ENCODE measurements at regions of chr10 and their contacts with region 1.

Region 1: GRCh38 chr10:12042797-12043651 is at the start of gene UPF2:
- DNase-seq: peak; percentile 94 to 99 (median 96)
- ATAC-seq: peak; percentile 87
- H3K4me3 ChIP-seq: peak within 1 kb of the TSS; percentile 99
- H3K4me3 Mint-ChIP-seq: peak within 1 kb of the TSS; percentile 98
- H3K27ac ChIP-seq: peak within 1 kb of the TSS; percentile 98 to 100
- H3K27ac Mint-ChIP-seq: peak within 1 kb of the TSS; percentile 100
- H3K4me1 ChIP-seq: peaks cover 17% of the 10 kb centered on the region
- H3K4me1 Mint-ChIP-seq: peaks cover 33% of the 10 kb centered on the region
- H3K27me3 ChIP-seq: no peaks in the 10 kb centered on the region
- H3K27me3 Mint-ChIP-seq: no peaks in the 10 kb centered on the region
- CTCF ChIP-seq: no peak
- total RNA-seq, gene UPF2: 14.5 to 15.3 TPM

Region 2: GRCh38 chr10:12031404-12031803 is 11.6 kb before region 1 on chr10:
- CTCF ChIA-PET with region 1: interaction called, 3 read pairs
- POLR2A ChIA-PET with region 1: interaction called, 16 read pairs
- intact Hi-C with region 1: no loop called
- DNase-seq: no peak
- ATAC-seq: no peak
- H3K4me3 ChIP-seq: no peak overlapping the region
- H3K4me3 Mint-ChIP-seq: no peak overlapping the region
- H3K27ac ChIP-seq: no peak overlapping the region
- H3K27ac Mint-ChIP-seq: peak overlapping the region; percentile 37
- H3K4me1 ChIP-seq: no peaks in the 10 kb centered on the region
- H3K4me1 Mint-ChIP-seq: peaks cover 37% of the 10 kb centered on the region
- H3K27me3 ChIP-seq: no peaks in the 10 kb centered on the region
- H3K27me3 Mint-ChIP-seq: no peaks in the 10 kb centered on the region
- CTCF ChIP-seq: no peak

Region 3: DNA sequence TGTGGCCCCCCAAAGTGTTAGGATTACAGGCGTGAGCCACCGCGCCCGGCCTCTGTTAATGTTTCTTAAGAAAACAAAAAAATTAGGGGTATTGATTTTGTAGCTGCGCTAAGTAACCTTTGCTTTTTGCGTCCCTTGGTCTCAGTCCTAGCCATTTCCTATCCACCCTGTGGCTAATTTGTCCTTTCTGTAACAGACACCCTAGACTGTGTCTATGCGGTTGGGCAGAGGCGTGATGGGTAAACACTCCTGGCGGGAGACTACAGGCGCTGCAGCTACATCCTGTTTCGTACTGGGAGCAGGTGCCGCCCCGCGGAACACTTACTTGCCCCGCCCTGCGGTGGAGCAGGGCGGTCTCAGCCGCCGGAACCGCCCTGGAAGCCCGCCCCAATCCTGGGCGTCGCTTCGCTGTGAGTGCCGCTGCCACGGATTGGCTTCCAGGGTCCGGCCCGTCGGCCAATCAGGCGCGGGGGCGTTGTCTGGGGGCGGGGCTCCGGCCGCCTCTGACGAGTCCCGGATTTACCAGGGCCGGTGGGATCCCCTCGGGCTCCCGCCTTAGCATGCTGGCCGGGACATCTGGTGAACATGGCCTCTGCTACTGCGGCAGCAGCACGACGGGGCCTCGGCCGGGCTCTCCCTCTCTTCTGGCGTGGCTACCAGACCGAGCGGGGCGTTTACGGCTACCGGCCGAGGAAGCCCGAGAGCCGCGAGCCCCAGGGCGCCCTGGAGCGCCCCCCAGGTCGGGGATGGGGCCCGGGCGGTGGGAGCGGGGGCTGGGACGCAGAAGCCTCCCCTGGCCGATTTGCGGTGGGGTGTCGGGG is 25.6 kb after region 1 on chr10 and contains the start of gene DHTKD1:
- CTCF ChIA-PET with region 1: interaction called, 4 read pairs
- POLR2A ChIA-PET with region 1: interaction called, 55 read pairs
- intact Hi-C with region 1: loop called (anchors 1 kb)
- DNase-seq: peak; percentile 95 to 99 (median 98)
- ATAC-seq: peak; percentile 98
- H3K4me3 ChIP-seq: peak within 1 kb of the TSS; percentile 85
- H3K4me3 Mint-ChIP-seq: peak within 1 kb of the TSS; percentile 91
- H3K27ac ChIP-seq: peak within 1 kb of the TSS; percentile 73 to 78
- H3K27ac Mint-ChIP-seq: peak within 1 kb of the TSS; percentile 95
- H3K4me1 ChIP-seq: peaks cover 15% of the 10 kb centered on the region
- H3K4me1 Mint-ChIP-seq: peaks cover 16% of the 10 kb centered on the region
- H3K27me3 ChIP-seq: no peaks in the 10 kb centered on the region
- H3K27me3 Mint-ChIP-seq: no peaks in the 10 kb centered on the region
- CTCF ChIP-seq: peak; percentile 27
- total RNA-seq, gene DHTKD1: 5.1 to 5.3 TPM

Region 4: GRCh38 chr10:12129222-12130111 is 86.4 kb after region 1 on chr10 and contains the start of gene SEC61A2:
- CTCF ChIA-PET with region 1: interaction called, 3 read pairs
- POLR2A ChIA-PET with region 1: interaction called, 8 read pairs
- intact Hi-C with region 1: loop called in 1 of 2 experiments (anchors 1 kb)
- DNase-seq: peak; percentile 91 to 99 (median 98)
- ATAC-seq: peak; percentile 88
- H3K4me3 ChIP-seq: peak within 1 kb of the TSS; percentile 79
- H3K4me3 Mint-ChIP-seq: peak within 1 kb of the TSS; percentile 96
- H3K27ac ChIP-seq: peak within 1 kb of the TSS; percentile 76 to 79
- H3K27ac Mint-ChIP-seq: peak within 1 kb of the TSS; percentile 83
- H3K4me1 ChIP-seq: peaks cover 21% of the 10 kb centered on the region
- H3K4me1 Mint-ChIP-seq: peaks cover 25% of the 10 kb centered on the region
- H3K27me3 ChIP-seq: no peaks in the 10 kb centered on the region
- H3K27me3 Mint-ChIP-seq: no peaks in the 10 kb centered on the region
- CTCF ChIP-seq: no peak
- total RNA-seq, gene SEC61A2: 9.9 to 10.8 TPM